ENCODE measurements at regions of chr12 and their contacts with region 1.

Region 1: GRCh38 chr12:95072900-95073697 is at the start of gene NR2C1:
- DNase-seq: peak; percentile 83 to 97 (median 91)
- ATAC-seq: peak; percentile 98
- H3K4me3 ChIP-seq: peak within 1 kb of the TSS; percentile 86 to 96
- H3K4me3 Mint-ChIP-seq: peak within 1 kb of the TSS; percentile 97
- H3K27ac ChIP-seq: peak within 1 kb of the TSS; percentile 71 to 74
- H3K27ac Mint-ChIP-seq: peak within 1 kb of the TSS; percentile 95
- H3K4me1 ChIP-seq: peaks cover 5% of the 10 kb centered on the region
- H3K4me1 Mint-ChIP-seq: peaks cover 26% of the 10 kb centered on the region
- H3K27me3 ChIP-seq: no peaks in the 10 kb centered on the region
- H3K27me3 Mint-ChIP-seq: no peaks in the 10 kb centered on the region
- CTCF ChIP-seq: no peak
- total RNA-seq, gene NR2C1: 40.7 to 49.2 TPM

Region 2: DNA sequence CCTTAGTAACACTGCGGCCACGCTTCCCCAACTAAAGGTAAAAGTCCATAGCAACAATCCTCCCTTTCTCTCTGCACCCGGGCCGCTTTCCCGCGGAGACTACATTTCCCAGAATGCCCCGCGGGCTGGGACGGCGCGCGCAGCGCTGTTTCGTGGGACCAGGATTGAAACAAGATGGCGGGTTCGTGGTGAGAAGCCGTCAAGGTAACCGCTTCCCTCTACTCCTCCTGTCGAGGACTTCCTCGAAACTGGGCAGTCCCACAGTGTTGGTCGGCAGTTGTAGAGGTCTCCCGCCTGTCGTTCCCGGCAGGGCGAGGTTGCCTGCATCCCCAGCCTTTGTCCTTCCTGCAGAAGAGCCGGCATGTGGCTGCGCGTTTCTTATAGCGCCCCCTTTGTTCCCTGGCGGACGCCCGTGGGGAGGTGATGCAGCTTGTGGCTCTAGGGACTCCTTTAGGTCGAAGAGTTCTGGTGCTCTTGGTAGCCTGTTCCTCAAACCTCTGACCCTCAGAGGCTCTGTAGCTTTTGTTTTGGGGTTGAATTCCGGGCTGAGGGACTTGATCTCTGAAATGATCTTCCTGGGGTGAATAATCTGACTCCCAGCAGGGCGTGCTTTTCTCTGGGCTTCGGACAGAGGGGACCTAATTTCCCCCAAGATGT is 1605.6 kb before region 1 on chr12 and contains the start of gene MRPL42:
- CTCF ChIA-PET with region 1: no interaction called
- POLR2A ChIA-PET with region 1: no interaction called
- intact Hi-C with region 1: loop called in 1 of 2 experiments (anchors 5 kb)
- DNase-seq: peak; percentile 88 to 96 (median 91)
- ATAC-seq: peak; percentile 94
- H3K4me3 ChIP-seq: peak within 1 kb of the TSS; percentile 64 to 95
- H3K4me3 Mint-ChIP-seq: peak within 1 kb of the TSS; percentile 93
- H3K27ac ChIP-seq: peak within 1 kb of the TSS; percentile 81 to 88
- H3K27ac Mint-ChIP-seq: peak within 1 kb of the TSS; percentile 95
- H3K4me1 ChIP-seq: peaks cover 15% of the 10 kb centered on the region
- H3K4me1 Mint-ChIP-seq: peaks cover 34% of the 10 kb centered on the region
- H3K27me3 ChIP-seq: no peaks in the 10 kb centered on the region
- H3K27me3 Mint-ChIP-seq: no peaks in the 10 kb centered on the region
- CTCF ChIP-seq: peak; percentile 71
- total RNA-seq, gene MRPL42: 31.6 to 33.2 TPM

Region 3: GRCh38 chr12:94262228-94263010 is 810.7 kb before region 1 on chr12:
- CTCF ChIA-PET with region 1: no interaction called
- POLR2A ChIA-PET with region 1: no interaction called
- intact Hi-C with region 1: loop called in 1 of 2 experiments (anchors 10 kb)
- DNase-seq: peak; percentile 45 to 90 (median 79)
- ATAC-seq: peak; percentile 91
- H3K4me3 ChIP-seq: peak overlapping the region; percentile 63 to 68
- H3K4me3 Mint-ChIP-seq: peak overlapping the region; percentile 99
- H3K27ac ChIP-seq: peak overlapping the region; percentile 74 to 92
- H3K27ac Mint-ChIP-seq: peak overlapping the region; percentile 99
- H3K4me1 ChIP-seq: peaks cover 21% of the 10 kb centered on the region
- H3K4me1 Mint-ChIP-seq: peaks cover 44% of the 10 kb centered on the region
- H3K27me3 ChIP-seq: no peaks in the 10 kb centered on the region
- H3K27me3 Mint-ChIP-seq: no peaks in the 10 kb centered on the region
- CTCF ChIP-seq: no peak

Region 4: GRCh38 chr12:94614288-94614721 is 458.8 kb before region 1 on chr12:
- CTCF ChIA-PET with region 1: no interaction called
- POLR2A ChIA-PET with region 1: no interaction called
- intact Hi-C with region 1: loop called in 1 of 2 experiments (anchors 5 kb)
- DNase-seq: no peak
- ATAC-seq: no peak
- H3K4me3 ChIP-seq: no peak overlapping the region
- H3K4me3 Mint-ChIP-seq: no peak overlapping the region
- H3K27ac ChIP-seq: no peak overlapping the region
- H3K27ac Mint-ChIP-seq: no peak overlapping the region
- H3K4me1 ChIP-seq: no peaks in the 10 kb centered on the region
- H3K4me1 Mint-ChIP-seq: no peaks in the 10 kb centered on the region
- H3K27me3 ChIP-seq: no peaks in the 10 kb centered on the region
- H3K27me3 Mint-ChIP-seq: peaks cover 1% of the 10 kb centered on the region
- CTCF ChIP-seq: no peak

Region 5: DNA sequence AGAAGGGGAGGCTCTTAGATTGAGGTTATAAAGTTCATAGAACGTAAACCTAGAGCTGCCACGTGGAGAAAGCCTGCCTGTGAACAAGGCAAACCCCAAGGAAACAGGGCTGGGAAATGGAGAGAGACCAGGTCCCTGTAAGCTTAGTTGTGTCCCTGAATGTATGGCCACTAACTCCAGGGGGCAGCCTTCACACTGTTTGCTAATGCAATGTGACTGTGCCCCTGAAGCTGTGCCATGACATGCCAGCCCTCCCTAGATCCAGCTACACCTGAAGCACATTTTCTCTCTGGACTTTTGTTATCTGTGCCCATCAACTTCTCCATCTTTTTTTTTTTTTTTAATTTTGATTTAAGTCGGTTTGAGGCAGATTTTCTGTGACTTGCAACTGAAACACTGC is 362.2 kb before region 1 on chr12:
- CTCF ChIA-PET with region 1: no interaction called
- POLR2A ChIA-PET with region 1: no interaction called
- intact Hi-C with region 1: loop called in 1 of 2 experiments (anchors 5 kb)
- DNase-seq: peak in 5 of 9 experiments; percentile 16 to 51 (median 26)
- ATAC-seq: peak; percentile 34
- H3K4me3 ChIP-seq: no peak overlapping the region
- H3K4me3 Mint-ChIP-seq: no peak overlapping the region
- H3K27ac ChIP-seq: no peak overlapping the region
- H3K27ac Mint-ChIP-seq: no peak overlapping the region
- H3K4me1 ChIP-seq: no peaks in the 10 kb centered on the region
- H3K4me1 Mint-ChIP-seq: no peaks in the 10 kb centered on the region
- H3K27me3 ChIP-seq: no peaks in the 10 kb centered on the region
- H3K27me3 Mint-ChIP-seq: no peaks in the 10 kb centered on the region
- CTCF ChIP-seq: no peak

Region 6: GRCh38 chr12:95240556-95240955 is 167.5 kb after region 1 on chr12:
- CTCF ChIA-PET with region 1: no interaction called
- POLR2A ChIA-PET with region 1: no interaction called
- intact Hi-C with region 1: no loop called
- DNase-seq: no peak
- ATAC-seq: no peak
- H3K4me3 ChIP-seq: no peak overlapping the region
- H3K4me3 Mint-ChIP-seq: no peak overlapping the region
- H3K27ac ChIP-seq: no peak overlapping the region
- H3K27ac Mint-ChIP-seq: no peak overlapping the region
- H3K4me1 ChIP-seq: peaks cover 4% of the 10 kb centered on the region
- H3K4me1 Mint-ChIP-seq: peaks cover 34% of the 10 kb centered on the region
- H3K27me3 ChIP-seq: no peaks in the 10 kb centered on the region
- H3K27me3 Mint-ChIP-seq: no peaks in the 10 kb centered on the region
- CTCF ChIP-seq: no peak

Region 7: DNA sequence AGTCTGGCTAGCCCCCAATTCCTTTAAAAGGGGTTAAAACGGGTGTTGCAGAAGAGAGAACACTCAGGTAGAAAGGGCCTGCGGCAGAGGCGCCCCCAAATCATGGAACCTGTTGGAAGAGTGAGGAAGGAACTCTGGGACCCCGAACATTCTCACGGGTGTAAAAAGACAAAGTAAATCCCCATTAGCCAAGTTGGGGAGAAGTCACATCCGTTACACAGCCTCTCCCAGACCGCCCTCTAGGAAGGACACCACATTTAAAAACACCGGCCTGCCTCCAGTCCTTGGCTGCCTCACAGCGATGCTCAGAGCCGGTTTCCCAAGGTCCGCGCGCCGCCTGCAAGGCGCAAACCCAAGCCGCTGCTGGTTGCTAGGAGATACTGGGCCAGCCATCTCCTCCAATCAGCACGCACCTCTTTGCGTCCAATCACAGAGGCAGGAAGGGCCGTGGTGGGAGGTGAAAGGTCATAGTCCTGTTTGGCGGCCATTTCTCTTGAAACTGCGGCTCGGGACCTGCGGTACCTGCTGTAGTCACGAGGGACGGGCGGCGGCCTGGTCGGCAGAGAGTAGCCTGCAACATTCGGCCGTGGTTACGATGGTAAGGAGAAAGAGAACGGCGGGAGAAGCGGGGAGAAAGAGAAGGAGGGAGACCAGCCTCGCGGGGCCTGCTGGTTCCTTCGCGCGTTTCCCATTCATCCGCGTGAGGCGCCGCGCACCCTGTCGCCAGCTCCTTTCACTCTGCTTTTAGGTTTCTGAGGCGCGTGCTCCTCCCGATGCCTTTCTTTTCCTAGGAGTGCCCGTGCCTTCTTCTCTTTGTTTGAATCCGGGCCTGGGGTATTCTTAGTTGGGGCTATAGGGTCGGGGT is 785.6 kb after region 1 on chr12 and contains the start of gene SNRPF:
- CTCF ChIA-PET with region 1: no interaction called
- POLR2A ChIA-PET with region 1: no interaction called
- intact Hi-C with region 1: loop called in 1 of 2 experiments (anchors 5 kb)
- DNase-seq: peak; percentile 88 to 97 (median 92)
- ATAC-seq: peak; percentile 94
- H3K4me3 ChIP-seq: peak within 1 kb of the TSS; percentile 83 to 86
- H3K4me3 Mint-ChIP-seq: no peak within 1 kb of the TSS
- H3K27ac ChIP-seq: peak within 1 kb of the TSS; percentile 79 to 92
- H3K27ac Mint-ChIP-seq: no peak within 1 kb of the TSS
- H3K4me1 ChIP-seq: peaks cover 22% of the 10 kb centered on the region
- H3K4me1 Mint-ChIP-seq: peaks cover 21% of the 10 kb centered on the region
- H3K27me3 ChIP-seq: peaks cover 0 to 2% of the 10 kb centered on the region in 2 experiments
- H3K27me3 Mint-ChIP-seq: peaks cover 3% of the 10 kb centered on the region
- CTCF ChIP-seq: no peak
- total RNA-seq, gene SNRPF: 42.9 to 49.2 TPM

Measured in CD8-positive, alpha-beta T cell (primary cell).